ENCODE measurements at regions of chr4 and their contacts with region 1.

Region 1: DNA sequence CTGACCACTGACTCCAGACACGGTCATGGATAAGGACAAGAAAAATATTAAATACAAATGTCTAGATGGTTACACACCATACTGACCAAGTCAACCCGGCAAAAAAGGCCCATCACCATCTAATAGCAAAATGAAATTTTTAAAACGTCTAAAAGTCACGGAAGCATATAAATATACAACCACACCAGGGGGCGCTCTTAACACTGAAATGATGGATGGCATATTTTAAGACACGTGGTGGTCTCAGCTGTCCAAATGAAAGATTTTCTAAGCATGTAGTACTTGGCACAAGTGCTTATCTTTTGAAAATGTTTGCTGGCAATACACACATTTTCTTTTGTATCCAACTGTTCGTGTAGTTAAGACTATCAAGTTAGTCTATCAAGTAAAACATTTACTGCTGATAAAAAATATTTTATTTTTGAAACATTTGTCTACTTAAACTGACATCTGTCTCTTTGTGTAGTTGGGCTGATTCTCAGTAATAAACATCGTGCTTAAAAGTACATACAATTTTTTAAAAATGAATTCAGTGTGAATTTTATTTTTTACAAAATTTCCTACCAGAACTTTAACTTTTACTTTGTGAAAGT is 64.6 kb downstream of the COX7B2 start:
- DNase-seq: no peak
- H3K4me3 ChIP-seq: no peak overlapping the region
- H3K27me3 ChIP-seq: no peaks in the 10 kb centered on the region
- CTCF ChIP-seq: peak; percentile 67

Region 2: GRCh38 chr4:45897946-45898585 is 946.4 kb before region 1 on chr4:
- CTCF ChIA-PET with region 1: no interaction called
- POLR2A ChIA-PET with region 1: no interaction called
- DNase-seq: no peak
- H3K4me3 ChIP-seq: no peak overlapping the region
- H3K27me3 ChIP-seq: no peaks in the 10 kb centered on the region
- CTCF ChIP-seq: no peak

Region 3: DNA sequence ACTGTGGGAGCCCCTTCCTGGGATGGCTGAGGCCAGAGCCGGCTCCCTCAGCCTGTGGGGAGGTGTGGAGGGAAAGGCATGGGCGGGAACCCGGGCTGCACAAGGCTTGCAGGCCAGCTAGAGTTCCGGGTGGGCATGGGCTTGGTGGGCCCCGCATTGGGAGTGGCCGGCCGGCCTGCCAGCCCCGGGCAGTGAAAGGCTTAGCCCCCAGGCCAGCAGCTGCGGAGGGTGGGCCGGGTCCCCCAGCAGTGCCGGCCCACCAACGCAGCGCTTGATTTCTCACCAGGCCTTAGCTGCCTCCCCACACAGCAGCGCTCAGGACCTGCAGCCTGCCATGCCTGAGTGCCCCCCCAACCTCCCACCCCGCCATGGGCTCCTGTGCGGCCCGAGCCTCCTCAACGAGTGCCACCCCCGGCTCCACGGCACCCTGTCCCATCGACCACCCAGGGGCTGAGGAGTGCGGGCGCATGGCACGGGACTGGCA is 13.4 kb before region 1 on chr4:
- CTCF ChIA-PET with region 1: interaction called, 10 read pairs
- POLR2A ChIA-PET with region 1: no interaction called
- DNase-seq: no peak
- H3K4me3 ChIP-seq: no peak overlapping the region
- H3K27me3 ChIP-seq: no peaks in the 10 kb centered on the region
- CTCF ChIP-seq: no peak

Region 4: GRCh38 chr4:46856333-46856732 is 11.9 kb after region 1 on chr4:
- CTCF ChIA-PET with region 1: interaction called, 13 read pairs
- POLR2A ChIA-PET with region 1: no interaction called
- DNase-seq: no peak
- H3K4me3 ChIP-seq: no peak overlapping the region
- H3K27me3 ChIP-seq: no peaks in the 10 kb centered on the region
- CTCF ChIP-seq: no peak

Region 5: DNA sequence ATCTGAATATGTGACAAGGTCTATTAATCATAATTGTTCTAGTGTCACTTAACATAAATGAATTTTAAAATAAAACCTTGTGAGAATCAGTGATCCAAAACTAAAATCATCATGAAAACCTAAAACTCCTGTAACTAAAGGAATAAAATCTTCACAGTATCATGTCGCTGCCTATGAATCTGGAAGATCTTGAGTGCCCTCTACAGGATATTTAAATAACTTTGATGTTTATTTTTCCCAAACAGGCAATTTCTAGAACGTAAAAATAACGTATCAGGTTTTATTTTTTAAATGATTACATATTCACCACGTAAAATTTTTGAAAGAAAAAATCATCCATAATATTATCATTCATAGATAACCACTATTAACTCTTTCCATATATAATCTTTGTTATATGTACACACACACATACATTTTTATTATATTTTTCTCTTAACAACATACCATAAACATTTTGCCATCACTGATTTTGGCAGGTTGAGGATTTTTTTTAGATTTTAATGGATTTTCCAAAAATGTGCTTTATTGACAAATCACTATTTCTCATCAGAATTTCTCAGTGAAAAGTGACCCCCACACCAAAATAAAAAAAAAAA is 539.5 kb after region 1 on chr4:
- CTCF ChIA-PET with region 1: interaction called, 14 read pairs
- POLR2A ChIA-PET with region 1: no interaction called
- DNase-seq: no peak
- H3K4me3 ChIP-seq: no peak overlapping the region
- H3K27me3 ChIP-seq: no peaks in the 10 kb centered on the region
- CTCF ChIP-seq: peak; percentile 40

Region 6: DNA sequence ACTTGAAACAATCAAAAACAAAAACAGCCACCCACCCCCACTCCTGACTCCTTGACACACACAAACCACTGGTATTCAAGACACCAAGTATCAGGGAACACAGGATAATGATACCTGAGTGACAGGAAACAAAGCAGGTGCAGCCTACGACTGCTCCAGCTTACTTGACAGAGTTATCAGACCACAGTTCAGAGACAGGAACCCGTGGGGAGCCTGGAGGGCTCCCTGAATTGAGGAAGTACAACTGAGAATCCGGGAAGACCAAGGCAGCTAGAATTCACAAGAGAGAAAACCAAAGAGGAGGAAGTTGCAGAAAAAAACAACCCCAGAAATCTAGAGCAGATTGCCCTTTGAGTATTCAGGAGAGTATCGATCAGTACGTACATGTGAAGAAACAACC is 598.6 kb after region 1 on chr4:
- CTCF ChIA-PET with region 1: no interaction called
- POLR2A ChIA-PET with region 1: no interaction called
- DNase-seq: no peak
- H3K4me3 ChIP-seq: no peak overlapping the region
- H3K27me3 ChIP-seq: no peaks in the 10 kb centered on the region
- CTCF ChIP-seq: no peak

Measured in BJ (cell line).